ENCODE measurements at regions of chr16 and their contacts with region 1.

Region 1: DNA sequence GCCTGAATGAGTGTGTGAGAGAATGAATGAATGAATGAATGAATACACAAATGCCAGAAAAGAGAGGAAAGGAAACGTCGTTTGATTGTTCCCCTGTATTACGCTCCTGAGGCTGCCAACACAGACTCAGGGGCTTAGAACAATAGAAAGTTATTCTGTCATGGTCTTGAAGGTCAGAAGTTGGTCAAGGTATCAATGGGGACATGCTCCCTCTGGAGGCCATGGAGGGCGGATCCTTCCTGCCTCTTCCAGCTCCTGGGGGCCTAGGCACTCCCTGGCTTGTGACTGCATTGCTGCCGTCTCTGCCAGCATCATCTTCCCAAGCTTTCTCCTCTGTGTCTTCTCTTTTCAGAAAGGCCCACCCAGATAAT is 1.5 kb upstream of the SLC38A8 start:
- DNase-seq: no peak
- ATAC-seq: no peak
- H3K4me3 ChIP-seq: no peak overlapping the region
- H3K27ac ChIP-seq: no peak overlapping the region
- H3K4me1 ChIP-seq: peaks cover 0 to 10% of the 10 kb centered on the region in 2 donors
- H3K27me3 ChIP-seq: peaks cover 0 to 4% (median 0%) of the 10 kb centered on the region in 3 donors
- CTCF ChIP-seq: peak in 1 of 5 experiments; percentile 16
- POLR2A ChIP-seq: no peak

Region 2: GRCh38 chr16:83913245-83913633 is 130.9 kb before region 1 on chr16:
- in situ Hi-C with region 1: no loop called
- intact Hi-C with region 1: no loop called
- DNase-seq: peak; percentile 30 to 94
- ATAC-seq: peak; percentile 50 to 79
- H3K4me3 ChIP-seq: no peak overlapping the region
- H3K27ac ChIP-seq: peak overlapping the region; percentile 85 to 96 (median 92)
- H3K4me1 ChIP-seq: peaks cover 22 to 33% of the 10 kb centered on the region in 2 donors
- H3K27me3 ChIP-seq: no peaks in the 10 kb centered on the region
- CTCF ChIP-seq: no peak
- POLR2A ChIP-seq: no peak

Region 3: GRCh38 chr16:83926726-83927397 is 117.2 kb before region 1 on chr16:
- in situ Hi-C with region 1: loop called in 1 of 4 experiments (anchors 10 kb)
- intact Hi-C with region 1: no loop called
- DNase-seq: peak; percentile 42 to 64
- ATAC-seq: peak; percentile 83 to 86
- H3K4me3 ChIP-seq: no peak overlapping the region
- H3K27ac ChIP-seq: no peak overlapping the region
- H3K4me1 ChIP-seq: peaks cover 8 to 10% of the 10 kb centered on the region in 2 donors
- H3K27me3 ChIP-seq: no peaks in the 10 kb centered on the region
- CTCF ChIP-seq: peak; percentile 75 to 98 (median 92)
- POLR2A ChIP-seq: no peak

Region 4: DNA sequence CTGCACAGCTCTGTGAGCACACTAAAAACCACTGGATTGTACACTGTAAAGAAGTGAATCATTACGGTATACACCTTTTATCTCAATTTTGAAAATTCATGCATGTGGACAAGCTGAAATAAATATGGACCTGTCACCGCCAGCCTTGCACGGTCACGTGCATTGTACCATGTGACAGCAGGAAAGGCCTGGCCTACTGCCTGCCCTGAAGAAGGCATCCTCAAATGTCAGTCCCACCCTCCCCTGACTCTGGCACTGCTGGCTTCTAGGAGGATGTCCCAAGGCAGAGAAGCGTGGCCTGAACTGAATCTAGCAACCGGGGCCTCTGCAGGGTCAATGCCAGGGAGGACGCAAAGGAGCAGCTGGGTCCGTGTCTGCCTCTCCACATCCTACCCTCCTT is 36.1 kb before region 1 on chr16:
- in situ Hi-C with region 1: no loop called
- intact Hi-C with region 1: no loop called
- DNase-seq: peak in 1 of 2 donors; percentile 47
- ATAC-seq: peak; percentile 50 to 55
- H3K4me3 ChIP-seq: no peak overlapping the region
- H3K27ac ChIP-seq: no peak overlapping the region
- H3K4me1 ChIP-seq: peaks cover 0 to 4% of the 10 kb centered on the region in 2 donors
- H3K27me3 ChIP-seq: no peaks in the 10 kb centered on the region
- CTCF ChIP-seq: no peak
- POLR2A ChIP-seq: no peak

Measured in gastrocnemius medialis (tissue), 4 donors.